OCI-LY7 (cell line): ENCODE measurements at regions of chr15 and their contacts with region 1.

Region 1: DNA sequence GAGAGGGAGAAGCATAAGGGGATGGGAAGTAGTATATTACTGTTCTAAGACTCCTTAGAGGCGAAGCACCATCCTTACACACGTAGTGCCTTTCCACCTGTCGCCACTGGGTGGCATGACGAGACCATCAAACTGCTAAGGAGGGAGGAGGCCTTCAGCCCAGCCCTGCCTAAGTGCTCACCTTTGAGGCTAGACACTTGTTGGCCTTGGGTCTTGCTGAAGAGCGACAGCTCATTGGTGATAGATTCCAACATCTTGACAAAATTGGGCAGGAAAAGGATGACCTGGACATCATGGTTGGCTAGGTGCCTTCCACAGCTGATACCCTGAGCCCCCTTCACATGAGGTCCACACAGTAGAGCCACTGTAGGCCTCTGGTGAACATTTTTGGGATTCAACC is 19.6 kb downstream of the CLK3 start:
- DNase-seq: peak; percentile 81
- H3K4me3 ChIP-seq: no peak overlapping the region
- H3K27ac ChIP-seq: no peak overlapping the region
- H3K4me1 ChIP-seq: peaks cover 5% of the 10 kb centered on the region
- CTCF ChIP-seq: peak; percentile 96

Region 2: DNA sequence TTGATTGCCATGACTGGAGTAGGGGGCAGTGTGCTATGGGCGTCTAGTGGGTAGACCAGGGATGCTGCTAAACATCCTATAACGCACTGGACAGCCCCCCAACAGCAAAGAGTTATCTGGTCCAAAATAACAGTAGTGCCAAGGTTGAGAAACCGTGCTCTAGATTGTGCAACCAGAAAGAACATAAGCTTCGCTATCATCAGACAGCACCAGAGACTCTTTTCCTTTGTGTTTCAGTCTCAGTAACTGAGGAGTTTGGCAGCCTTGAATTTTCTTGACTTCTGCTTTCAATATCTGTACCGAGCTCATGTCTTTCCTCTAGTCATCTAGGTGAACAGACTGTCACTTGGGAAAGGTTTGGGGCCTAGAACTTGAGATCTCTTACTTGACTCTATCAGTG is 85.4 kb before region 1 on chr15:
- CTCF ChIA-PET with region 1: no interaction called
- POLR2A ChIA-PET with region 1: no interaction called
- intact Hi-C with region 1: no loop called
- DNase-seq: no peak
- H3K4me3 ChIP-seq: no peak overlapping the region
- H3K27ac ChIP-seq: no peak overlapping the region
- H3K4me1 ChIP-seq: peaks cover 14% of the 10 kb centered on the region
- CTCF ChIP-seq: no peak

Region 3: GRCh38 chr15:74620636-74621545 is 14.3 kb before region 1 on chr15:
- CTCF ChIA-PET with region 1: interaction called, 7 read pairs
- POLR2A ChIA-PET with region 1: no interaction called
- intact Hi-C with region 1: loop called (anchors 1 kb)
- DNase-seq: peak; percentile 82
- H3K4me3 ChIP-seq: no peak overlapping the region
- H3K27ac ChIP-seq: no peak overlapping the region
- H3K4me1 ChIP-seq: peaks cover 14% of the 10 kb centered on the region
- CTCF ChIP-seq: peak; percentile 99

Region 4: DNA sequence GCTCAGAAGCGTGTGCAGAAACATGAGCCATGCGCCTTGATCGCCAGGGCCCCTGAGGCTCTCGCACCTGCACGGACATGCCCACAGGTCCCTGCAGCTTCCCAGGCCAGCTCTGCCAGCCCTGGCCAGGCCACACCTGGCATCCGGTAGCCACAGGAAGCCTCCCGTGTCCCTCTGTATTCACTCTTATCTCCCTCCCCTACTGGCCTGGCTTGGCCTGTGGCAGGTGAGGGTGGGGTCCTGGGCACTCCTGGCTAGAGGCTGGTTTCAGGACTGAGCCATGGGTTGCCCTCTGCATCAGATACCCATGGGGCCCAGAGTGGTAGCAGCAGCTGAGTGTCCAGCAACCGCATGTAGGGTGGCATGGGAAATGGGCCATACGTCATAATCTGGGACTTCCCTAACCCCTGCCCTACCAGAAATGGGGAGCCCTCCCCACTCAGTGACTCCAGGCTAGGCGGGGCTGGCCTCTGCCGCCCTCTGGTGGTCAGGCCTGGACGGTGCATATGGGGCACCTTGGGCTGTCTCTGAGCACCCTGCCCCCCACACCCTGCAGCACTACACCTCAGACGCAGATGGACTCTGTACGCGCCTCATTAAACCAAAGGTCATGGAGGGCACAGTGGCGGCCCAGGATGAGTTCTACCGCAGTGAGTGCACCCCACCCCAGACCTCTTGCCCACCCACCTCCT is 164.8 kb after region 1 on chr15:
- CTCF ChIA-PET with region 1: no interaction called
- POLR2A ChIA-PET with region 1: no interaction called
- intact Hi-C with region 1: loop called (anchors 1 kb)
- DNase-seq: peak; percentile 77
- H3K4me3 ChIP-seq: no peak overlapping the region
- H3K27ac ChIP-seq: peak overlapping the region; percentile 61
- H3K4me1 ChIP-seq: peaks cover 55% of the 10 kb centered on the region
- CTCF ChIP-seq: peak; percentile 88

Region 5: DNA sequence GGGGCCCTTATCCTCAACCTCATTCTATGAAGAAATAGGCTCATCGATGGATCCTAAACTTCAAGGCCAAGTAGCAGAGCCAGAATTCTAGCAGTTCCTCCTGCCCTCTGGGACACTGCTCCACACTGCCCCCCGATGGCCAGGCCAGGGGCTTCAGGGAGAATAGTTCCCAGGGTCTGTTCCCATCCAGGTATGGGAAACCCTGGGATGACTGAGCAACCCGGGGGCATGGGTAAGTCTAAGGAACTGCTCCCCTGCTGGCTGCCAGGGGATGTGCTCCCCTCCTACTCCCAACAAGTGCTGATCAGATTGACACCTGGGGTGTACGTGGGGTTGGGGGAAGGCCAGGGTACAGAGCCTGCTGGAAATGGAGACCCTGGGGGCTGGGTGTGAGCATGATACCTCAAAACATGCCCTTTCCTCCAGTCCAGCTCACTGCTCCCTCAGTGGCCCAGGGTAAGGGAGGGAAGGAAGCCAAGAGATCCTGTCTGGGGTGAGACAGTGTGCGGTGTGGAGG is 200.1 kb after region 1 on chr15:
- CTCF ChIA-PET with region 1: interaction called, 3 read pairs
- POLR2A ChIA-PET with region 1: no interaction called
- intact Hi-C with region 1: loop called (anchors 1 kb)
- DNase-seq: peak; percentile 53
- H3K4me3 ChIP-seq: no peak overlapping the region
- H3K27ac ChIP-seq: no peak overlapping the region
- H3K4me1 ChIP-seq: peaks cover 23% of the 10 kb centered on the region
- CTCF ChIP-seq: peak; percentile 93

Region 6: DNA sequence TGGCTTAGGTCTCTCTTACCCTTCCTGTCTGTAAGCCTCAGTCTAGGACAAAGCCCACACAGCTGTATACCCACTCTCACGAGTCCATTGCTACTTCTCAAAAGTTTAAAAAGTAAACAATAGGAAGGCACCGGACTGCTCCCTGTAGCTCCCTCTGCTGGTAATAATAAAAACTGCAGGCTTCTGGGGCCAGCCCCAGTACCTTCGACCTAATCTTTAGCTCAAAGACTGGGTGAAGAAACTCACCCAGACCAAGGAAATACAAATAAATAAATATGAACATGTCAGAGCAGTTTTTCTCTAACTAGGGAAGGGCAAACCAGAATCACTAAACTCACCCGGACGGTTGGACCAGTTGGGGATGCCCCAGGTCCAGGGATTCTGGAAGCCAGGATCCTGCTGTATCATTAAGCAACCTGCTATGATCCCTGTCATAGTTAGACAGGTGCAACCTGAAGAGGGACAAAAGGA is 266.4 kb after region 1 on chr15:
- CTCF ChIA-PET with region 1: no interaction called
- POLR2A ChIA-PET with region 1: no interaction called
- intact Hi-C with region 1: loop called (anchors 5 kb)
- DNase-seq: peak; percentile 72
- H3K4me3 ChIP-seq: no peak overlapping the region
- H3K27ac ChIP-seq: peak overlapping the region; percentile 19
- H3K4me1 ChIP-seq: peaks cover 39% of the 10 kb centered on the region
- CTCF ChIP-seq: peak; percentile 99

Region 7: GRCh38 chr15:74950078-74951000 is 315.1 kb after region 1 on chr15:
- CTCF ChIA-PET with region 1: no interaction called
- POLR2A ChIA-PET with region 1: no interaction called
- intact Hi-C with region 1: loop called (anchors 2 kb)
- DNase-seq: peak; percentile 80
- H3K4me3 ChIP-seq: no peak overlapping the region
- H3K27ac ChIP-seq: no peak overlapping the region
- H3K4me1 ChIP-seq: peaks cover 22% of the 10 kb centered on the region
- CTCF ChIP-seq: peak; percentile 99

Region 8: GRCh38 chr15:75182187-75183131 is 547.2 kb after region 1 on chr15:
- CTCF ChIA-PET with region 1: no interaction called
- POLR2A ChIA-PET with region 1: no interaction called
- intact Hi-C with region 1: no loop called
- DNase-seq: no peak
- H3K4me3 ChIP-seq: no peak overlapping the region
- H3K27ac ChIP-seq: no peak overlapping the region
- H3K4me1 ChIP-seq: peaks cover 11% of the 10 kb centered on the region
- CTCF ChIP-seq: peak; percentile 44